Activated CD4-positive, alpha-beta memory T cell treated with anti-CD3 and anti-CD28 coated beads for 36 hours (primary cell): ENCODE measurements at regions of chr21 and their contacts with region 1.

Region 1: GRCh38 chr21:32604464-32604863 is 7.7 kb downstream of the CFAP298 start:
- DNase-seq: no peak
- H3K4me3 Mint-ChIP-seq: no peak overlapping the region
- H3K27ac Mint-ChIP-seq: no peak overlapping the region
- H3K4me1 Mint-ChIP-seq: peaks cover 3% of the 10 kb centered on the region
- H3K27me3 Mint-ChIP-seq: no peaks in the 10 kb centered on the region

Region 2: GRCh38 chr21:32587651-32588050 is 16.8 kb before region 1 on chr21:
- CTCF ChIA-PET with region 1: interaction called, 20 read pairs
- POLR2A ChIA-PET with region 1: no interaction called
- intact Hi-C with region 1: no loop called
- DNase-seq: no peak
- H3K4me3 Mint-ChIP-seq: no peak overlapping the region
- H3K27ac Mint-ChIP-seq: no peak overlapping the region
- H3K4me1 Mint-ChIP-seq: no peaks in the 10 kb centered on the region
- H3K27me3 Mint-ChIP-seq: no peaks in the 10 kb centered on the region